ENCODE measurements at regions of chr11 and their contacts with region 1.

Region 1: DNA sequence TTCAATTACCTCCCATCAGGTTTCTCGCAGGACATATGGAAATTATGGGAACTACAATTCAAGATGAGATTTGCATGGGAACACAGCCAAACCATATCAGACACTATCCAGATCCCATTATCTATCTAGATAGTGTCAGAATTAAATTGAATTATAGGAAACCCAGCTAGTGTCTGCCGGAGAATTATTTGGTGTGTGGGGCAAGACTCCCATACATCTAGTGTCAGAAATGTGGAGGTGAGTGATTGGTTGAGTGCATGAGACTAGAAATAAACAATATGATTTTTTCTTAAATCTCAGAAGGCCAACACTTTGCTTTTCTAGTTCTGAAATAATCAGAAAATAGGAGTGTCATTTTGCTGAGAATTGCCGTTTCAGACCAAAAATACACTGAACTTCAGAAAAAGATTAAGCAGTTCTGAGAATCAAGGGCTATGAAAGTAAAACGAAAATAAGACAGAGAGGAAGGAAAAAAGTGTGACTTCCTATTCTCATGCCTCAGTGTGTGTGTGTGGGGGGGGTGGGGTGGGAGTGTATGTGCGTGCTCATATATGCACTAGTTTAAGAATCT is 21.3 kb downstream of the CASP12 start:
- DNase-seq: no peak
- ATAC-seq: peak; percentile 80
- H3K4me3 Mint-ChIP-seq: peak overlapping the region; percentile 66
- H3K27ac Mint-ChIP-seq: peak overlapping the region; percentile 86
- H3K4me1 Mint-ChIP-seq: peaks cover 57% of the 10 kb centered on the region
- H3K27me3 Mint-ChIP-seq: no peaks in the 10 kb centered on the region
- CTCF ChIP-seq: no peak

Region 2: DNA sequence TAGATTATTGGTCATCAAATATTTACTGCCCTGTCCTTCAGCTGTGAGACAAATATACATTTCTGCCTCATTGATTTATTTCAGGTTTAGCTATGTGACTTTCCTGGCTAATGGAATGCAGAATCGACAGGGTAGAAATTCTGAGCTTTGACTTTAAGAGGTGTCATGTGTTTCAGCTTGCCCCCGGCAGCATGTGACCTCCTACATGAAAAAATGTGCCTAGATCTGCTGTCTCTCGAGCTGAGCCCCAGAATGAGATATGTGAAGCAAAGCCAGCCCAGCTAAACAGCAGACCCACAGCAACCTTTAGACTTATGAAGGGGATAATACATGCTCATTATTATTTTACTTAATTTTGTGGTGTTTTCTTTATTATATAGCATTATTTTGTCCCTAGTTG is 364.6 kb before region 1 on chr11:
- CTCF ChIA-PET with region 1: no interaction called
- POLR2A ChIA-PET with region 1: no interaction called
- intact Hi-C with region 1: no loop called
- DNase-seq: no peak
- ATAC-seq: no peak
- H3K4me3 Mint-ChIP-seq: no peak overlapping the region
- H3K27ac Mint-ChIP-seq: no peak overlapping the region
- H3K4me1 Mint-ChIP-seq: no peaks in the 10 kb centered on the region
- H3K27me3 Mint-ChIP-seq: no peaks in the 10 kb centered on the region
- CTCF ChIP-seq: no peak

Region 3: GRCh38 chr11:104705490-104706190 is 171.3 kb before region 1 on chr11:
- CTCF ChIA-PET with region 1: no interaction called
- POLR2A ChIA-PET with region 1: interaction called, 4 read pairs
- intact Hi-C with region 1: loop called (anchors 5 kb)
- DNase-seq: no peak
- ATAC-seq: peak; percentile 94
- H3K4me3 Mint-ChIP-seq: peak overlapping the region; percentile 76
- H3K27ac Mint-ChIP-seq: peak overlapping the region; percentile 92
- H3K4me1 Mint-ChIP-seq: peaks cover 27% of the 10 kb centered on the region
- H3K27me3 Mint-ChIP-seq: no peaks in the 10 kb centered on the region
- CTCF ChIP-seq: no peak

Region 4: DNA sequence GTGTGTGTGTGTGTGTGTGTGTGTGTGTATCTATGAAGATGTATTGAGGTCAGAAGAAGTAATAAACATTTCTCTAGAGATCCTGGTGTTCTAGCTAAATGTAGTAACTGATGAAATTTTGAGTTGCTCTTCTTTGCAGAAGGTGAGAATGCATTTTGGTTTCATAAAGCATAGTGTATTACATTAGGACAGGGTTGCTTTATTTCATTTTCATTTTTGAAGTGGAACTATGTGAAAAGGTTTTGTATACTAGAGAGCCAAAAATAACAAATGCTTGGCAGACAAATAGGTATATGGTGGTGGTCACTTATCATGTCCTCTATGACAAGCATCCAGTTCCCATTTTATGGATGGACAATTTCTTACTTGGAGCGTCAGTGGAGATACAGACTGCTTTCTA is 77.7 kb before region 1 on chr11:
- CTCF ChIA-PET with region 1: no interaction called
- POLR2A ChIA-PET with region 1: no interaction called
- intact Hi-C with region 1: loop called (anchors 2 kb)
- DNase-seq: no peak
- ATAC-seq: peak; percentile 57
- H3K4me3 Mint-ChIP-seq: peak overlapping the region; percentile 74
- H3K27ac Mint-ChIP-seq: peak overlapping the region; percentile 91
- H3K4me1 Mint-ChIP-seq: peaks cover 30% of the 10 kb centered on the region
- H3K27me3 Mint-ChIP-seq: no peaks in the 10 kb centered on the region
- CTCF ChIP-seq: no peak

Region 5: GRCh38 chr11:104843150-104843836 is 33.7 kb before region 1 on chr11:
- CTCF ChIA-PET with region 1: interaction called, 3 read pairs
- POLR2A ChIA-PET with region 1: no interaction called
- intact Hi-C with region 1: loop called (anchors 5 kb)
- DNase-seq: no peak
- ATAC-seq: peak; percentile 20
- H3K4me3 Mint-ChIP-seq: no peak overlapping the region
- H3K27ac Mint-ChIP-seq: no peak overlapping the region
- H3K4me1 Mint-ChIP-seq: peaks cover 17% of the 10 kb centered on the region
- H3K27me3 Mint-ChIP-seq: no peaks in the 10 kb centered on the region
- CTCF ChIP-seq: no peak

Region 6: DNA sequence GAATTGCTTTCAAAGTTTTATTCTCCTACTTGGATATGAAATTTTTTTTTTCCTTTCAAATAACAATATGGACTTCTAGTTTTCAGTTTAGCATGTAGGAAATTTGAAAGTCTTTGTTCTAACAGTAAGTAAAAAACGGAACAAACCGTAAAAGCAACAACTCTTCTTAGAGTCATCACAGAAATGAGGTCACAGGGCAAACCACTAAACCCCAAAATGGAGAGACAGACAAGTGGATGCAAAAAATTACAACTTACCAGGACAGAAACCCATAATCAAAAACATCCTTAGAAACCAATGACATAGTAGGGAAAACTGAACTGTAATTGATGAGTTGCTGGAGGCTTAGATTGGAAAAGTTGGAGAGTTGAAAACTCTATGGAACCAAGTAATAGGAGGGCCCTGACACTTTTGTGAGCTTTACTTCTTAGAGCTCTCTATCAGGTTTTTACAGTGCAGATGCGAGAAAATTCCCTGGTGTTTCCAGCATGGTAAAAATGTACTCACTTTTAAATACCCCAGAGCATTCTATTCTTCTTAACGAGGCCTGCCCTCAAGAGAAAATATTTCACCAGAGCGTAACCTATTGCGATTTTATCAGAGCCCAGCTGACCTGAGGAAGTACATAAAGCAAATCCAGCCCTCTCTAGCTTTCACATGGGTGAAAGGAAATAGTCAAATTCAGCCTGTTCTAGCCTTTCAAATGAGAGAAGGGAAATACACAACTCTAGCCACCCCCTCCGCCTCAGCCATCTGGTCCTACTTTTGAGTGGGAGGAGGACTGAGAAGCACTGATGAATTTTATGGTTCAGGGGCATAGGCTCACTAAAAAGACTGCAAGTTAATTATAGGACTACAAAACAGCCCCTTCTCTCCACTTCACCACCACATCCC is 17.8 kb before region 1 on chr11:
- CTCF ChIA-PET with region 1: no interaction called
- POLR2A ChIA-PET with region 1: no interaction called
- intact Hi-C with region 1: loop called (anchors 1 kb)
- DNase-seq: peak; percentile 18
- ATAC-seq: peak; percentile 92
- H3K4me3 Mint-ChIP-seq: peak overlapping the region; percentile 68
- H3K27ac Mint-ChIP-seq: peak overlapping the region; percentile 87
- H3K4me1 Mint-ChIP-seq: peaks cover 34% of the 10 kb centered on the region
- H3K27me3 Mint-ChIP-seq: no peaks in the 10 kb centered on the region
- CTCF ChIP-seq: no peak

Region 7: GRCh38 chr11:104897891-104898684 is 21.1 kb after region 1 on chr11 and contains the start of gene CASP12:
- CTCF ChIA-PET with region 1: no interaction called
- POLR2A ChIA-PET with region 1: no interaction called
- intact Hi-C with region 1: loop called (anchors 1 kb)
- DNase-seq: no peak
- ATAC-seq: peak; percentile 5
- H3K4me3 Mint-ChIP-seq: peak within 1 kb of the TSS; percentile 54
- H3K27ac Mint-ChIP-seq: peak within 1 kb of the TSS; percentile 42
- H3K4me1 Mint-ChIP-seq: peaks cover 32% of the 10 kb centered on the region
- H3K27me3 Mint-ChIP-seq: no peaks in the 10 kb centered on the region
- CTCF ChIP-seq: no peak
- total RNA-seq, gene CASP12: not detected in 2 replicates

Region 8: GRCh38 chr11:104918113-104918824 is 41.3 kb after region 1 on chr11:
- CTCF ChIA-PET with region 1: no interaction called
- POLR2A ChIA-PET with region 1: no interaction called
- intact Hi-C with region 1: loop called (anchors 2 kb)
- DNase-seq: no peak
- ATAC-seq: peak; percentile 69
- H3K4me3 Mint-ChIP-seq: peak overlapping the region; percentile 87
- H3K27ac Mint-ChIP-seq: peak overlapping the region; percentile 92
- H3K4me1 Mint-ChIP-seq: peaks cover 74% of the 10 kb centered on the region
- H3K27me3 Mint-ChIP-seq: no peaks in the 10 kb centered on the region
- CTCF ChIP-seq: no peak

Region 9: DNA sequence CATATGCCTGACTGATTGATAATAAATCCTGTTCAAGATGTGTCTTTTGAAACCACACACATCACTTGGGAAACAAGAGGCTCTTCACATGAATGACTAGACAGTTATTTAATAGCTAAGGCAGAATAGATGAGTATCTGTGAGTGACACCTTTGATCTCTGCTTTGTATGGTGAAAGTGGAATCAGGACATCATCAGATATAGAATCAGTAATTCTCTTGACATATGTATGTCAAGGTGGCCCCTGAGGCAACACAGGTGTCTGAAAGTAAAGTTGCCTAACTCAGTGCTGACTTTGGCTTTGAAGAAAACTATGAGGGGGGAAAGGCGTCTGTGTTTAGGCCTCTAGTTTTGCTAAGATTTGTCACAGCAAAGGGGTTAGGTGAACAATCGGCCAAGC is 102.9 kb after region 1 on chr11:
- CTCF ChIA-PET with region 1: no interaction called
- POLR2A ChIA-PET with region 1: no interaction called
- intact Hi-C with region 1: no loop called
- DNase-seq: no peak
- ATAC-seq: no peak
- H3K4me3 Mint-ChIP-seq: no peak overlapping the region
- H3K27ac Mint-ChIP-seq: no peak overlapping the region
- H3K4me1 Mint-ChIP-seq: no peaks in the 10 kb centered on the region
- H3K27me3 Mint-ChIP-seq: no peaks in the 10 kb centered on the region
- CTCF ChIP-seq: no peak

Measured in activated B cell treated with CpG ODN at 0.5 μM for 24 hours (primary cell).